Cardiac septum (tissue), 1 donor: ENCODE measurements at regions of chr6 and their contacts with region 1.

Region 1: GRCh38 chr6:75208298-75209183 is 2.7 kb upstream of the COL12A1 start:
- DNase-seq: peak; percentile 91

Region 2: GRCh38 chr6:73739096-73739495 is 1469.4 kb before region 1 on chr6:
- intact Hi-C with region 1: loop called (anchors 2 kb)
- DNase-seq: no peak

Region 3: DNA sequence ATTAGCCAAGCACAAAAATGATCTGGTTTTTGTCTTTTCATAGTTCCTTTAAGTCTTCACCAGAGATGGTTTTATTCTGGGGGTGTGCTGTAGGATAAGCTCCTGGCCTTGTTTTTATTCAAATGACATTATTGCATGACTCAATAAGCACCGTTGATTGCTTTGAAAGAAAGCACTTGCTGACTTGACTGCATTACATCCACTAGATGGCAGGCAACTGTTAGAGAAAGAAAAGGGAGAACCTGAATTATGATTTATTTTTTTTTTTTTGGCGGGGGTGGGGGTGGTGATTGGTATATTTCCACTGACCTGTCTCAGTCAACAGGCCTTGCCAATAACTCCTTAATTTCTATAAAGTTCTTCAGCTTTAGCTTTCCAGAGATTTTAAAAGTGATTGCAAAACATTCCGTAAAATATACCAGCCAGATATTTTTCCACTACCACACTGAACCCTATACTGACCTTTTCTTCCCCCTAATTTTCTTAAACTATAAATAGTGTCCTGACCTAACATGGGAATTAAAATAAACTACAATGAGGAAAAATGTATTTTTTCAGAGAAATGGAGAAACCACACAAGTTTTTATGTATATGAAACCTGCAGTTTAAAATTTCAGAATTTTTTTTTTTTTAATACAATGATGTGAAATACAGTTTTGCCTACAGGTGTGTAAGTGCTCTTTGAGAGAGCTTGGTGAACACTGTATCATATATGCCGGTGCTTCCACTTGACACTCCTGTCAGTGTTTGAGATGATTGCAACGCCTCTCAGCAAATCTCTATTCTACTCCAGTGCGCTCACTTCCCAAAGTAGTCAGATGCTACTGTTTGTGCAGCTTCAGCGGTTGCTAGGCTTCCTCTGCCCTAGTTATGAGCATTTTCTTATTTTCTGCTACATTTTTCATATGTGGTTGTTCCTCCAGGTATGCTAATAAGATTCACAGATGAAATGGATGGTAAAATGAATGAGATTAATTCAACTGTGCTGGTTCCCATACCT is 1238.3 kb before region 1 on chr6:
- intact Hi-C with region 1: loop called (anchors 5 kb)
- DNase-seq: no peak

Region 4: DNA sequence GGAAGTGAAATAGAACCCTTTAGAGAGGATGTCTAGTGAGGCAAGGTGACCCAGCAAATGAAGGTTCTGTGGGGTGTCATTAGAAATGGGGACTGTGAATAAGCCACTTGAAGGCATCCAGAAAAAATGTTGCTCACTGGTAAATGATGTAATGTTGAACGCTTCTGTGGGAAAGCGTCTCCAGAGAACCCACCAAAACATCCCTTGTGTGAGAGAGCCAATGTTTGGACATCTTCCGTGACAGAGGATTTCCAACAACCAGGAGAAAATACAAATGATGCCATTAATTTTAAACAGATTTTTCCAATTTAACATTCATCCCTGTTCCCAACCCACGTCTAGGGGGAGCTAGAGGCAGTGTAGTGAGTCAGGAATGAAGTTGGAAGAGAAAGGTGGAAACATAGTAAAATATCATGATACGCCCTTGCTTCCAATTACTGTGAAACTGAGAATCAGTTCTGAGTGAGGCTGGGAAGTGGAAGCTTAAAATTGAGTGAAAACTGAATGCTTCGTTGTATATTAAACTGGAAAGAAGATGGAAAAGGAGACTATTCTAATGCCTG is 928.3 kb before region 1 on chr6:
- intact Hi-C with region 1: loop called (anchors 10 kb)
- DNase-seq: no peak

Region 5: DNA sequence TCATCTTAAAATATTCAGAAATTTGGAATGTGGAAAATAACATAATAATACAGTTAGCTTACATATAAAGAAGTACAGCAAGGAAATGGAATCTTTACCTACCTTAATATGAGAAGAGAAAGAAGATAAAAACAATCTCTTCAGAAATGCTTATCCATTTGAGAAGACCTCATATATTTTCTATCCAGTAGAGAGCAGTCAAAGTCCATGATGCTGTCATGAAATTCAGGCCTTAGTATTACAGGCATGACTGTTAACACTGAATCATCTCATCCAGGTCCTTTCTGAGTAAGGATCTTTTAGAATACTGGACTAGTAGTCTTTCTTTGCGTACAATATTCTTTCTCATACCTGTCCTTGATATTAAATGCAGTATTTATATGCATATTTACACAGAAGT is 799.1 kb before region 1 on chr6:
- intact Hi-C with region 1: loop called (anchors 5 kb)
- DNase-seq: no peak

Region 6: DNA sequence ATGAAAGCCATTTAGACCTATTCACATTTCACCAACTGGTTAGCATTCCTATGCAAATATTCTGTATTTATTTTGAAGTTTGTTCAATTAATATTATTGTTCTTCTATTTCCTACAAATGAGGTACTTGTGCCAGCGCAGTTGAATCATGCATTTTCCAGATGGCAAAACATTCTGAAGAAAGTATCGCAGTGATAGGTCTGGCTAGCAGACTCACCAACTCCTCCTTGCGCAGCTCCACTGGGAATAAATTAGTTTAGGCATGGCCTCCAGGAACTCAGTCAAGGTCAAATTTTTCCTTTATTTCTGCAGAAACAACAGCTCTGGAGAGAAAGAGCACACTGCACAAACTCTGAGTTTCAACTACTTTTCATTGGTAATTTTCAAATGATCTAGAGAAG is 440.4 kb before region 1 on chr6:
- intact Hi-C with region 1: loop called (anchors 10 kb)
- DNase-seq: no peak

Region 7: GRCh38 chr6:75098709-75099108 is 109.8 kb before region 1 on chr6:
- intact Hi-C with region 1: loop called (anchors 5 kb)
- DNase-seq: no peak